AG04450 (cell line): ENCODE measurements at regions of chr9 and their contacts with region 1.

Region 1: DNA sequence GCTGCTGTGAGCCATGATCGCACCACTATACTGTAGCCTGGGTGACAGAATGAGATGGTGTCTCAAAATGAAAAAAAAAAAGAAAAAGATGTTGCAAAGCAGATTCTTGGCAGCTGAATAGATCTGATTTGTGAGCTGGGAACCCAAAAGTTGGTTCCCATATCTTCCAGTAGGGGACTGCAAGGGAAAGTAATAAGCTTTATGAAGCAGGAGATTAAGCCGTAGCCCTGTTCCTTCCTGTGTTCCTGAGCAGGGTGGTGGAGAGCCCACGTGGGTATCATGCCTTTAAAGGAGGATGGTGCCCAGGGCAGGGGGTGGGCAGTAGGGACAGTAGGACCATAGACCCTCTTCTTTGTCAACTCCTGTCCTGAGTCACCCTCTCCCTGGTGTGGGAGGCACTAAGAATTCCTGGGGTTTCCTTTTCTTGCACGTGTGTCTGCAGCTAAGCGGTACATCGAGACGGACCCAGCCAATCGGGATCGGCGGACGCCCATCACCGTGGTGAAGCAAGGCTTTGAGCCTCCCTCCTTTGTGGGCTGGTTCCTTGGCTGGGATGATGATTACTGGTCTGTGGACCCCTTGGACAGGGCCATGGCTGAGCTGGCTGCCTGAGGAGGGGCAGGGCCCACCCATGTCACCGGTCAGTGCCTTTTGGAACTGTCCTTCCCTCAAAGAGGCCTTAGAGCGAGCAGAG is 37.9 kb downstream of the STOM start:
- DNase-seq: no peak
- H3K4me3 ChIP-seq: no peak overlapping the region
- H3K27ac ChIP-seq: peak overlapping the region; percentile 57
- H3K27me3 ChIP-seq: no peaks in the 10 kb centered on the region
- CTCF ChIP-seq: peak; percentile 68

Region 2: DNA sequence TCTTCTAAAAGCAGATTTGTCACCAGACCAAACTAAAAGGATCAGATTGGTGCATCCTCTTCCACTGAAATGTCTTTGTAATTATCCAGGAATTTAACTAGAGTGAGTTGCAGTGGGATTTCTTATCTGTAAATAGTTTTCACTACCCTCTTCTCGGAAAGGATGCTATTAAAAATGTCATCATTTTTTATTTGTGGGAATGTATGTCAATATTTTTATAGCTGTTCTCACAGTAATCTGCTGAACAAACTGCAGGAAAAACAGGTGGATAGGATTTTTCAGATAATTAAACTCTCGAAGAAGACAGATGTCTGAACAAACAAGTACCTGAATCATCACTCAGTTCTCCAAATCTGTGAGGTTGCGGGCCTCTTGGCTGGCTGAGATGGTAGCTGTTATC is 193.2 kb before region 1 on chr9:
- CTCF ChIA-PET with region 1: no interaction called
- POLR2A ChIA-PET with region 1: no interaction called
- DNase-seq: no peak
- H3K4me3 ChIP-seq: no peak overlapping the region
- H3K27ac ChIP-seq: no peak overlapping the region
- H3K27me3 ChIP-seq: no peaks in the 10 kb centered on the region
- CTCF ChIP-seq: no peak

Region 3: GRCh38 chr9:121376214-121376830 is 44.2 kb after region 1 on chr9:
- CTCF ChIA-PET with region 1: interaction called, 20 read pairs
- POLR2A ChIA-PET with region 1: interaction called, 10 read pairs
- DNase-seq: no peak
- H3K4me3 ChIP-seq: no peak overlapping the region
- H3K27ac ChIP-seq: no peak overlapping the region
- H3K27me3 ChIP-seq: no peaks in the 10 kb centered on the region
- CTCF ChIP-seq: peak; percentile 53